OCI-LY7 (cell line): ENCODE measurements at regions of chr12 and their contacts with region 1.

Region 1: GRCh38 chr12:54984658-54985376 is at the start of gene TESPA1:
- DNase-seq: peak; percentile 96
- H3K4me3 ChIP-seq: peak within 1 kb of the TSS; percentile 68
- H3K27ac ChIP-seq: peak within 1 kb of the TSS; percentile 75
- H3K4me1 ChIP-seq: peaks cover 57% of the 10 kb centered on the region
- CTCF ChIP-seq: no peak
- total RNA-seq, gene TESPA1: 9.5 and 9.7 TPM in 2 replicates

Region 2: GRCh38 chr12:53344824-53345485 is 1639.9 kb before region 1 on chr12:
- CTCF ChIA-PET with region 1: interaction called, 16 read pairs
- POLR2A ChIA-PET with region 1: no interaction called
- intact Hi-C with region 1: no loop called
- DNase-seq: peak; percentile 80
- H3K4me3 ChIP-seq: peak overlapping the region; percentile 65
- H3K27ac ChIP-seq: no peak overlapping the region
- H3K4me1 ChIP-seq: peaks cover 21% of the 10 kb centered on the region
- CTCF ChIP-seq: peak; percentile 91

Region 3: GRCh38 chr12:54998958-54999510 is 14.2 kb after region 1 on chr12:
- CTCF ChIA-PET with region 1: interaction called, 3 read pairs
- POLR2A ChIA-PET with region 1: interaction called, 11 read pairs
- intact Hi-C with region 1: no loop called
- DNase-seq: peak; percentile 76
- H3K4me3 ChIP-seq: peak overlapping the region; percentile 19
- H3K27ac ChIP-seq: peak overlapping the region; percentile 44
- H3K4me1 ChIP-seq: peaks cover 40% of the 10 kb centered on the region
- CTCF ChIP-seq: no peak

Region 4: DNA sequence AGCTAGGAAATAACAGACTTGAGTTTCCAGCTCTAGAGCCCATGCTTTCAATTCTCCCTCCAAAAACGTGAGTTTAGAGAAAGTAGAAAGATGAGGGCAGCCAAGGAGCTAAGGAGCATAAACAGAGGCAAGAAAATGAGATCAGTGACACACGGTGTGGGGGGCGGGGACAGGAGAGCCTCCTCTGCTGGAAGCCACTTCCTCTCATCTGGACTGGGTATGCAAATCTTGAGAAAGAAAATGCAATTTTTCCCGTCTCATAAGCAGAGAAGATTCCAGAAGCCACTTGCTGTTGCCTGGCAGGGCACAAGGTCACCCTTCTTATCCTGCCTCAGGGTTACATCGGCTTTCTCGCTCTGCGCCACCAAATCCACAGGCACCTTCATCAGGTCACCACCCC is 657.9 kb after region 1 on chr12:
- CTCF ChIA-PET with region 1: no interaction called
- POLR2A ChIA-PET with region 1: no interaction called
- intact Hi-C with region 1: loop called (anchors 10 kb)
- DNase-seq: peak; percentile 52
- H3K4me3 ChIP-seq: peak overlapping the region; percentile 2
- H3K27ac ChIP-seq: no peak overlapping the region
- H3K4me1 ChIP-seq: peaks cover 20% of the 10 kb centered on the region
- CTCF ChIP-seq: no peak